CD8-positive, alpha-beta T cell (primary cell): ENCODE measurements at regions of chr22 and their contacts with region 1.

Region 1: DNA sequence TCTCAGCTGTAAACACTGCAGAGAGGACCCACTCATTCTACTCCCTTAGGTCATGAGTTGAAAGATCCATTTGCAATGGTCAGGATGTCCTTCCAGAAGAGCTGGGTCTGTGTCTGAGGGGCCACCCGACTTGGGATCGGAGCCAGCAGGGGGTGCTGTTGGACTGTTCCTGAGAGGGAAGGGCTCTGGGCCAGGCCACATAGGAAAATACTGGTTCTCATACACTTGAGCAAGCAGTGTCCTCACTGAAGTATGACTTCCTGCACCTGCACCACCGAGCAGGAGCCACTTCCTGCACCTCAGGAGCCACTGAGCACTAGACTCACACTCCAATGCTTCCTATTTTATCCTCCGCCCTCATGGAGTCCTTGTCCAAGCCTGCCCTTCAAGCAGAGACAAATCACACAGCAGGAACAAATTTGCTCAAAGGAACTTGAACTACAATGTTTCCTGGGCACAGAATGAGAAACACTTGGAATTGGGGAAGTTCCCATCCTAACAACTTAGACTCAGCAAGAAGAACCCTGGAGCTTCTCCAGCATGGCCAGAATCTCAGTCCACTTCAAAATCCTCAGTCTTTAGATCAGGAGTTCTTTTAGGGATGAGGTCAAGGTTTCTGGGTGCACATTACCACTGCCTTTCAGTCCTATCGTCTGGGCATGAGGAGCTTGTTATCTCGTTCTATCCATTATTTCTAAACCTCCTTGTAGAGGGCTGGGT is 36.6 kb upstream of the VPREB1 start:
- DNase-seq: peak; percentile 37 to 87 (median 80)
- ATAC-seq: peak; percentile 77
- H3K4me3 ChIP-seq: no peak overlapping the region
- H3K4me3 Mint-ChIP-seq: no peak overlapping the region
- H3K27ac ChIP-seq: no peak overlapping the region
- H3K27ac Mint-ChIP-seq: no peak overlapping the region
- H3K4me1 ChIP-seq: peaks cover 13% of the 10 kb centered on the region
- H3K4me1 Mint-ChIP-seq: peaks cover 19% of the 10 kb centered on the region
- H3K27me3 ChIP-seq: no peaks in the 10 kb centered on the region
- H3K27me3 Mint-ChIP-seq: no peaks in the 10 kb centered on the region
- CTCF ChIP-seq: peak; percentile 55

Region 2: GRCh38 chr22:22110548-22111266 is 97.3 kb before region 1 on chr22:
- CTCF ChIA-PET with region 1: no interaction called
- POLR2A ChIA-PET with region 1: no interaction called
- intact Hi-C with region 1: no loop called
- DNase-seq: peak in 3 of 9 experiments; percentile 47 to 59 (median 49)
- ATAC-seq: peak; percentile 67
- H3K4me3 ChIP-seq: no peak overlapping the region
- H3K4me3 Mint-ChIP-seq: no peak overlapping the region
- H3K27ac ChIP-seq: no peak overlapping the region
- H3K27ac Mint-ChIP-seq: no peak overlapping the region
- H3K4me1 ChIP-seq: no peaks in the 10 kb centered on the region
- H3K4me1 Mint-ChIP-seq: peaks cover 9% of the 10 kb centered on the region
- H3K27me3 ChIP-seq: no peaks in the 10 kb centered on the region
- H3K27me3 Mint-ChIP-seq: no peaks in the 10 kb centered on the region
- CTCF ChIP-seq: peak; percentile 15

Region 3: DNA sequence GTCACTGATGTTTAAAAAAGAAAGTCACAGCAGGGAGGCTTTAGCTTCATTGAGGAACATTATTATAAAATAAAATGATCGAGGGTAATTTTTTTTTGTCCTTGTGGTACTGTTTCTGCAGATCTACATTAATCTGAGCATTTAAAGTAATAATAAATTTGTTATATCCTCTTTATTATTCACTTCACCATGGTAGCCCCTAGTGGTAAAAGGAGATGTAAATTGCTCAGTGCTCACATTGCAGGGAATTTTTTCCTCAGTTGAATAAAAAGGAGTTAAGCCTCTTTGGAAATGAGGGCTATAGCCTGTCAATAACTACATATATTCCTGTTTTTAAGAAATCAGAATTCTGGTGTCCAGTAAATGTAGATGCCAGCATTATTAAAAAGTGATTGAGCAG is 63.1 kb before region 1 on chr22:
- CTCF ChIA-PET with region 1: no interaction called
- POLR2A ChIA-PET with region 1: no interaction called
- intact Hi-C with region 1: no loop called
- DNase-seq: no peak
- ATAC-seq: no peak
- H3K4me3 ChIP-seq: no peak overlapping the region
- H3K4me3 Mint-ChIP-seq: no peak overlapping the region
- H3K27ac ChIP-seq: no peak overlapping the region
- H3K27ac Mint-ChIP-seq: no peak overlapping the region
- H3K4me1 ChIP-seq: no peaks in the 10 kb centered on the region
- H3K4me1 Mint-ChIP-seq: no peaks in the 10 kb centered on the region
- H3K27me3 ChIP-seq: peaks cover 0 to 3% of the 10 kb centered on the region in 2 experiments
- H3K27me3 Mint-ChIP-seq: peaks cover 41% of the 10 kb centered on the region
- CTCF ChIP-seq: no peak

Region 4: GRCh38 chr22:22195265-22196017 is 12.6 kb before region 1 on chr22:
- CTCF ChIA-PET with region 1: interaction called, 22 read pairs
- POLR2A ChIA-PET with region 1: interaction called, 4 read pairs
- intact Hi-C with region 1: no loop called
- DNase-seq: peak; percentile 64 to 87 (median 80)
- ATAC-seq: peak; percentile 91
- H3K4me3 ChIP-seq: no peak overlapping the region
- H3K4me3 Mint-ChIP-seq: no peak overlapping the region
- H3K27ac ChIP-seq: no peak overlapping the region
- H3K27ac Mint-ChIP-seq: no peak overlapping the region
- H3K4me1 ChIP-seq: no peaks in the 10 kb centered on the region
- H3K4me1 Mint-ChIP-seq: no peaks in the 10 kb centered on the region
- H3K27me3 ChIP-seq: no peaks in the 10 kb centered on the region
- H3K27me3 Mint-ChIP-seq: peaks cover 12% of the 10 kb centered on the region
- CTCF ChIP-seq: peak; percentile 95

Region 5: GRCh38 chr22:22235558-22235957 is 27.6 kb after region 1 on chr22:
- CTCF ChIA-PET with region 1: interaction called, 25 read pairs
- POLR2A ChIA-PET with region 1: no interaction called
- intact Hi-C with region 1: loop called (anchors 1 kb)
- DNase-seq: peak in 8 of 9 experiments; percentile 32 to 71 (median 52)
- ATAC-seq: no peak
- H3K4me3 ChIP-seq: no peak overlapping the region
- H3K4me3 Mint-ChIP-seq: no peak overlapping the region
- H3K27ac ChIP-seq: no peak overlapping the region
- H3K27ac Mint-ChIP-seq: no peak overlapping the region
- H3K4me1 ChIP-seq: no peaks in the 10 kb centered on the region
- H3K4me1 Mint-ChIP-seq: no peaks in the 10 kb centered on the region
- H3K27me3 ChIP-seq: no peaks in the 10 kb centered on the region
- H3K27me3 Mint-ChIP-seq: peaks cover 2% of the 10 kb centered on the region
- CTCF ChIP-seq: peak; percentile 41

Region 6: GRCh38 chr22:22342697-22343580 is 134.9 kb after region 1 on chr22:
- CTCF ChIA-PET with region 1: interaction called, 4 read pairs
- POLR2A ChIA-PET with region 1: no interaction called
- intact Hi-C with region 1: loop called in 1 of 2 experiments (anchors 5 kb)
- DNase-seq: peak; percentile 37 to 78 (median 60)
- ATAC-seq: peak; percentile 61
- H3K4me3 ChIP-seq: no peak overlapping the region
- H3K4me3 Mint-ChIP-seq: no peak overlapping the region
- H3K27ac ChIP-seq: no peak overlapping the region
- H3K27ac Mint-ChIP-seq: no peak overlapping the region
- H3K4me1 ChIP-seq: no peaks in the 10 kb centered on the region
- H3K4me1 Mint-ChIP-seq: no peaks in the 10 kb centered on the region
- H3K27me3 ChIP-seq: no peaks in the 10 kb centered on the region
- H3K27me3 Mint-ChIP-seq: no peaks in the 10 kb centered on the region
- CTCF ChIP-seq: peak; percentile 81